AG04449 (cell line): ENCODE measurements at regions of chr19 and their contacts with region 1.

Region 1: GRCh38 chr19:50705422-50706019 is 14.1 kb downstream of the SHANK1 start:
- DNase-seq: no peak
- H3K4me3 ChIP-seq: no peak overlapping the region
- CTCF ChIP-seq: peak; percentile 84

Region 2: GRCh38 chr19:50669302-50670101 is 36.0 kb before region 1 on chr19:
- CTCF ChIA-PET with region 1: interaction called, 12 read pairs
- POLR2A ChIA-PET with region 1: no interaction called
- DNase-seq: no peak
- H3K4me3 ChIP-seq: no peak overlapping the region
- CTCF ChIP-seq: peak; percentile 83

Region 3: GRCh38 chr19:50717026-50717723 is 11.7 kb after region 1 on chr19:
- CTCF ChIA-PET with region 1: interaction called, 61 read pairs
- POLR2A ChIA-PET with region 1: interaction called, 5 read pairs
- DNase-seq: no peak
- H3K4me3 ChIP-seq: peak overlapping the region; percentile 1; the same call in 1 of the 2 replicates
- CTCF ChIP-seq: no peak